Cardiac septum (tissue), 1 donor: ENCODE measurements at regions of chr4 and their contacts with region 1.

Region 1: GRCh38 chr4:143207557-143207956 is 22.8 kb downstream of the USP38 start:
- DNase-seq: no peak

Region 2: DNA sequence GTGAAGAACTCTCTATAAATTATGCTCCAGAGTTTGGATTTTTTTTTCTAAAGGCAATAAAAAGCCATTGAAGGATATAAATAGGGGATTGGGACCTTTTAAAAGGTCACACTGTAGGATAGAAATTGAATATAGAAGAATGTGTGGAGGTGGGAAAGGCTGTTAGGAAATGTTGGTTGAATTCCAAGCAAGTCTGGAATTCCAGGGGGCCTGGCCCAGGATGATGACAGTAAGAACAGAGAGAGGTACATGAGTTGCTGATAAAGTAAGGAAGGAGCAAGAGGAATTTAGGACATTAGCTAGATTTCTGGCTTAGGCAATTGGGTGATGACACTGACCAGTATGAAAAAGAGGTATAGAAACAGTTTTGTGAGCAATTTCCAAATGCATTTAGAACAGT is 118.3 kb before region 1 on chr4:
- intact Hi-C with region 1: no loop called
- DNase-seq: no peak

Region 3: DNA sequence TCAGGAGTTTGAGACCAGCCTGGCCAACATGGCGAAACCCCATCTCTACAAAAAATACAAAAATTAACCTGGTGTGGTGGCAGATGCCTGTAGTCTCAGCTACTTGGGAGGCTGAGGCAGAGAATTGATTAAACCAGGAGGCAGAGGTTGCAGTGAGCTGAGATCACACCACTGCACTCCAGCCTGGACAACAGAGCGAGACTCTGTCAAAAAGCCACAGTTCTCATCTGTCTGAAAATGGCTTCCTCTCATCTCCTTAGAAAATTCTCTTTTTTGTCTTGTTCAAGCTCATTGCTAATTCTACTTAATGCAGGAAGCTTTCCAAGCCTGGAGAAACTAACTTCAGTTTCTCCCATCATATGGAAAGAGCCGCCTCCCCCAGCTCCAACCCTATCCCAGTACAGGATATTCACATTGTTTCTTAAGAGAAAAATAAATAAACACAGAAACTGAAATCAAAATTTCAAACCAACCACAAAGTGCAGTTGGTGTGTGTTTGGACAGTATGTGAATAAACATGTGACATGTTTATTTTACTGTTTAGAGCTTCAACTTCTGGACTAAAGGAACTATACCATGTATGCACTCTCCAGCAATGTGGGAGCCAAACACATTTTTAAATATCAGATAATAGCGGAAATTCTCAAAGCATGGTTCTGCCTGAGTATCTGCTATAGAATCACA is 74.1 kb after region 1 on chr4:
- intact Hi-C with region 1: loop called (anchors 5 kb)
- DNase-seq: no peak

Region 4: GRCh38 chr4:143482840-143483239 is 275.3 kb after region 1 on chr4:
- intact Hi-C with region 1: loop called (anchors 2 kb)
- DNase-seq: no peak